Thyroid gland (tissue), 4 donors: ENCODE measurements at regions of chr17 and their contacts with region 1.

Region 1: GRCh38 chr17:73192894-73193701 is at the start of gene COG1:
- DNase-seq: peak; percentile 74 to 88
- H3K4me3 ChIP-seq: peak within 1 kb of the TSS; percentile 86 to 98 (median 90)
- H3K27ac ChIP-seq: peak within 1 kb of the TSS; percentile 63 to 88 (median 72)
- H3K4me1 ChIP-seq: peaks cover 6 to 10% of the 10 kb centered on the region in 2 donors
- H3K27me3 ChIP-seq: no peaks in the 10 kb centered on the region
- CTCF ChIP-seq: no peak
- POLR2A ChIP-seq: peak in 1 of 2 donors; percentile 76
- total RNA-seq, gene COG1: 31.9 to 42.9 (median 37.2) TPM

Region 2: DNA sequence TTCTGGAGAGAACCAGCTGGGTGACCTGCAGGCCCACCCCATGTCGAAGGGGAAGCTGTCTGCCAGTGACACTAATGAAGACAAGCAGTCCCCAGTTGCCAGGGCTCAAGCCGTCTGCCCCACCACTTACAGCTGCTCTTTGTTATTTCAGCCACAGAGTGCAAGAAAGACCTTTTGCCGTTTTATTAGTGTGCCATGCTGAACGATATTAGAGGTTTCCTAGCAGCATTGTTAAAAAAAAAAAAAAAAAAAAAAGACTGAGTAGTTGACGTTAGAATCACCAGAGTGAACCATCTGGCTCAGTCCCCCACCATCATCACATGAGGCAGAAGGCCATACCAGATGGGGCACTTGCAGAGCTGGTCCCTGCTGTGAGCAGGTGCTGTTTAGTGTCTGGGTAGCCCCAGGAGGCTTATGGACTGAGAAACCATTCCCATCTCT is 74.1 kb before region 1 on chr17:
- intact Hi-C with region 1: no loop called
- DNase-seq: peak in 1 of 2 donors; percentile 11
- H3K4me3 ChIP-seq: no peak overlapping the region
- H3K27ac ChIP-seq: no peak overlapping the region
- H3K4me1 ChIP-seq: no peaks in the 10 kb centered on the region
- H3K27me3 ChIP-seq: no peaks in the 10 kb centered on the region
- CTCF ChIP-seq: no peak
- POLR2A ChIP-seq: no peak

Region 3: DNA sequence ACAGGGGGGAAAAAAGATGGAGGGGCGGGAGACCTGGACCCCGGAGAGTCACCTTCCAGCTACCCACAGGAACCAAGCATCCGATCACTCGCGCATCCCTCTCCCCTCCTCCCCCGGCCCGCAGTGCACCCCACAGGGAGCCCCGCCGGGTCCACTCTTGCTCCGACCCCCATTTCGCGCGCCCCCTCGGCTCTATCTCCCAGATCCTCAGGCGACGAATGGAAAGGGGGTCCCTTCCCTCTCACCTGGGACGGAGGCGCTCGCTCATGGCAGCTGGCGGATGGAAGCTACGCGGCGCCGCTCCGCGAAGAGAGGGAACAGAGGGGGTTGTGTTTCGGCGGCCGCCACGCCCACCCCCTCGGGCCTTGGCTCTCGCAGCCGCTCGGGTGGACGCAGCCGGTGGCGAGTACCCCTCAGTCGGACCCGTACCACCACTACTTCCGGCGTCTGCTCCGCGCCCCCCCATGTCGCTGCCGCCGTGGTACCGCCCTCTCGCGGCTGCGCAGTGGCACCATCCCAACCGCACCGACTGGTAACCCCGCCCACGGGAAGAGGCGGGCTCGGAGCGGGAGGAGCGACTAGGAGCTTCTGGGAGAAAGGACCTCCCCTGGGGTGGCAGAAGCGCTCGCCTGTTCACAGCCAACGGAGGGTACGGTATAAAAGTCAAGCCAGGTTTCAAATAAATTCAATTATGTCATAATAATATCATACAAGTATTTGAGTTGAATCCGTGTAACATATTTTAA is 38.9 kb after region 1 on chr17:
- intact Hi-C with region 1: loop called (anchors 5 kb)
- DNase-seq: peak; percentile 95 to 96
- H3K4me3 ChIP-seq: peak overlapping the region; percentile 92 to 94 (median 94)
- H3K27ac ChIP-seq: peak overlapping the region; percentile 64 to 89 (median 84)
- H3K4me1 ChIP-seq: peaks cover 18 to 37% of the 10 kb centered on the region in 2 donors
- H3K27me3 ChIP-seq: no peaks in the 10 kb centered on the region
- CTCF ChIP-seq: peak in 3 of 6 experiments; percentile 16 to 28 (median 17)
- POLR2A ChIP-seq: peak; percentile 42 to 91

Region 4: GRCh38 chr17:73371285-73371684 is 178.2 kb after region 1 on chr17:
- intact Hi-C with region 1: loop called (anchors 5 kb)
- DNase-seq: no peak
- H3K4me3 ChIP-seq: no peak overlapping the region
- H3K27ac ChIP-seq: no peak overlapping the region
- H3K4me1 ChIP-seq: peaks cover 0 to 5% of the 10 kb centered on the region in 2 donors
- H3K27me3 ChIP-seq: no peaks in the 10 kb centered on the region
- CTCF ChIP-seq: no peak
- POLR2A ChIP-seq: no peak